ENCODE measurements at regions of chr1 and their contacts with region 1.

Region 1: DNA sequence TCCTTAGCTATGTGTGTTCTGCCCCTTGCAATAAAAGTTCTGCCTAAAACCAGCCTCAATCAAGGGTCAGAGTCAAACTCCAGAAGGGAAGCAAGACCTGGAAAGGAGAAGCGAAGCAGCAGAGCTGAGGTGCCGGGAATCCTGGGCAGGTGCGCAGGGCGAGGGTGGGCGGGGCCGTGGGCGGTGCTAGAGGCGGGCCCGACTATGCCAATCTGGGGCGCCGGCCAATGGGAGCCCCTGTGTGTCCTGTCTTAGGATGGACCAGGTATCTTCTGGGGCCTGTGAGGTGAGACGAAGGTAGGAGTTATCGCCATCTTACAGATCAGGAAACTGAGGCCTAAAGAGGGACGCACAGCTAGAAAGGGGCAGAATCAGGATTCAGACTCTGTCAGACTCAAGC is 120.3 kb downstream of the PTPRU start:
- DNase-seq: no peak
- H3K4me3 ChIP-seq: no peak overlapping the region
- CTCF ChIP-seq: no peak

Region 2: DNA sequence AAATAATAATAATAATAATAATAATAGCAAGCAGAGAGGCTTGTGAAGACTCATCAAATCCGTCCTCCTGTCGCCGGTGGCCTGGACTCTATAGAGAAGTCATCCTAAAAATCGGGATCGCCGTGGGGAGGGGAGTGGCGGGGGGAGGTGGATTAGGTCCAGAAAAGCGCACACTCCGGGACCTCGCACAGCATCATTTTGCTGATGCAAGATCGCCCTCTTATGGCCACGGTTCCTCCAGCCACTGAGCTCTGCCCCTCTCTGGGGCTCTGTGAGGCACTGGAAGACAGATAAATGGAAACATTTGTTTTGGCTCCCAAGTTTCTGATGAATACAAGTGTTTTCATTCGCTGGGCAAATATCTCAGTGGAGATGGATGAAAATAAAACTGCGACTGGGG is 754.8 kb after region 1 on chr1:
- in situ Hi-C with region 1: loop called (anchors 25 kb)
- DNase-seq: peak; percentile 8
- H3K4me3 ChIP-seq: no peak overlapping the region
- CTCF ChIP-seq: peak; percentile 60

Measured in astrocyte of the cerebellum (primary cell).